Right lobe of liver (tissue), 6 donors: ENCODE measurements at regions of chr14 and their contacts with region 1.

Region 1: GRCh38 chr14:82811246-82811645 is 1277.6 kb upstream of the SEL1L start:
- DNase-seq: no peak
- ATAC-seq: no peak
- H3K4me3 ChIP-seq: no peak overlapping the region
- H3K27ac ChIP-seq: no peak overlapping the region
- H3K4me1 ChIP-seq: no peaks in the 10 kb centered on the region
- H3K27me3 ChIP-seq: no peaks in the 10 kb centered on the region
- CTCF ChIP-seq: no peak
- POLR2A ChIP-seq: no peak

Region 2: DNA sequence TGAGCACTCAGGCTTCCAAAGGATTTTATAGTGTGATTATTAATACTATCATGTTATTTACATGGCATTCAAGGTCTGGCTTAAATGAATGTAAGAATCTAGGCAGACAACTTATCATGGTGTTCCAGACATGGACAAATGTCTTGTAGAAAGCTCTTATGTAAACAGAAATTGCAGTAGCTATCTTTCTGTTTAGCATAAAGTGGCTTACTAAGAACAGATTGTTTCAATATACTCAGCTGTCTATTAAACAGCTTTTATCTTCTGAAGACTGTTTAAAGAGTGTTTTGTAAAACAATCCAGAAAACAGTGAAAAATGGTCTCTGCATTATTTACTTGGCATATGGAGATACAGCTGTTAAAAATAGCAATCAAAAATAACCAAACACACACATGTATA is 215.8 kb before region 1 on chr14:
- intact Hi-C with region 1: loop called in 1 of 2 experiments (anchors 10 kb)
- DNase-seq: no peak
- ATAC-seq: no peak
- H3K4me3 ChIP-seq: no peak overlapping the region
- H3K27ac ChIP-seq: no peak overlapping the region
- H3K4me1 ChIP-seq: no peaks in the 10 kb centered on the region
- H3K27me3 ChIP-seq: no peaks in the 10 kb centered on the region
- CTCF ChIP-seq: no peak
- POLR2A ChIP-seq: no peak

Region 3: DNA sequence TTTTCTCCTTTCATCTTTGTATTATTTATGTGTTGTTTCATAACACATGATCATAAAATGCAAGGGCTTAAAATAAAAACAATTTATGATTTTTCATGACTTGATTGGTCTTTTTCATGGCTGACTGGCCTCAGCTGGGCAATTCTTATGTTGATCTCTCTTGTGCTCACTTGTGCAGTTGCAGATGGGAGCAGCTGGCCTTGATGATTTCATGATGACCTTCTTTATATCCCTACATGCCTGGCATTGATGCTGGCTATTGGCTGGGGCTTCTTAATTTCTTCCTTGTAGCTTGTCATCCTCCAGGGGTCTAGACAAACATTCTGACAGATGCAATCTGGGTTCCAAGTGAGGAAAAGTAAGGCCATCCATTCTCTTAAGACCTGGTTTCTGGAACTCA is 885.9 kb after region 1 on chr14:
- intact Hi-C with region 1: no loop called
- DNase-seq: no peak
- ATAC-seq: no peak
- H3K4me3 ChIP-seq: no peak overlapping the region
- H3K27ac ChIP-seq: no peak overlapping the region
- H3K4me1 ChIP-seq: no peaks in the 10 kb centered on the region
- H3K27me3 ChIP-seq: no peaks in the 10 kb centered on the region
- CTCF ChIP-seq: no peak
- POLR2A ChIP-seq: no peak